ENCODE measurements at regions of chr1 and their contacts with region 1.

Region 1: DNA sequence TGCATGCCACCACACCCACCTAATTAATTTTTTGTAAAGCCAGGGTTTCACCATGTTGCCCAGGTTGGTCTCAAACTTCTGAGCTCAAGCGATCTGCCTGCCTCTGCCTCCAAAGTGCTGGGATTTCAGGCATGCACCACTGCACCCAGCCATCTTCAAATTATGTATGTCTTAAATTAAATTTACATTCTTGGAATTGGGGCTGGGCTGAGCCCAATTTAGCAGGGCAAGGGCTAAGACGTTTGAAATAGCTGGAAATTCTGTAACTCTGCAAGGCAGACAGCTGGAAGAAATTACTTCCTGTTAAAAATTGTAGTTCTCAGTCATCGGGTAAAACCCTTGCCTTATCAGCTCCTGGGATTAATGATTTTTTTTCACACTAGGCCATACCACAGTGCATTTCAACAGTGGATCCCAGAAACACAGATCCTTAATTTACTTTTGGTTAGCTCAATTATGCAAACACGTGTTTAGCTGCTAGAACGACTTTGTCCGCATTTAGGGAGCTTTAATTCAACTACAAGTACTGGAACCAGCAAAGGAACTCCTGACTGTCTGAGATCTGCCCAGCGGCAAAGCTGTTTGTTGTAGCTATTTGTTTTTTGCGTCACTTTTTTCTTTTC is 83.3 kb downstream of the OLFML3 start:
- DNase-seq: no peak
- H3K4me3 ChIP-seq: no peak overlapping the region
- H3K27ac ChIP-seq: no peak overlapping the region
- H3K4me1 ChIP-seq: no peaks in the 10 kb centered on the region
- H3K27me3 ChIP-seq: no peaks in the 10 kb centered on the region
- CTCF ChIP-seq: no peak

Region 2: DNA sequence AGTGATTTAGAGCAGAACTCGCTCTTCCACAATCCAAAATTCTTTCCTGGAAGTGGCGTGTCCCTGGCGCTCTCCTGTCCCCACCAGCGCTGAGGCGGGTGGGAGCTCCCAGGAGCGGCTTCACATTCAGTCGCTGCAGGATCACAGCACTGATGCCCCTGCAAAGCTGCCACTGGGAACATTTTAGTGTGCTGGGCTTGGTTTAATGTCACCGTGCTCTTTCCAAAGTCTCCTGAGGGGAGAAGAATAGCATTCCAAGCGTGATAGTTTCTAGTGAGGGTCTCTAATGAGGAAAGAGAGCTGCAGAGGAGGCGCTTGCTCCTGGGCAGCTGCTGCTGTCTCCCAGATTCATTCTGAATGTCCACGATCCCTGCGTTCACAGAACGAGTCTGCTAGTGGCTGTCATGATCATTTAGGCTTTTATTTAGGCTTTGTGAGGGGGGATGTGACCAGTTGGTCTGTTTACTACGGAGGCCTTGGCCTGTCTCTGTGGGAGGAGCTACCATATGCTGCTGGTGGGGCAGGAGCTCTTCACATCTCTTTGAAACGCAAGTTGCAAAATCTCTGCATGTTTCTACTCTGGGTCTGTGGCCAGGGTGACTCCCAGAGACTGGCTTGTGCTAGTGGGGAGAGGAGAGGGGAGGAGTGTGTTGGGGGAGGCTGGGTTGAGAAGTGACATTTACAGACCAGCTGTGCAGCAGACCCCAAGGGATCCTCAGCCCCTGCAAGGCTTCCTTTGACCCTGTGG is 59.9 kb before region 1 on chr1:
- intact Hi-C with region 1: no loop called
- DNase-seq: peak in 1 of 2 donors; percentile 56
- H3K4me3 ChIP-seq: no peak overlapping the region
- H3K27ac ChIP-seq: no peak overlapping the region
- H3K4me1 ChIP-seq: no peaks in the 10 kb centered on the region
- H3K27me3 ChIP-seq: no peaks in the 10 kb centered on the region
- CTCF ChIP-seq: no peak

Region 3: DNA sequence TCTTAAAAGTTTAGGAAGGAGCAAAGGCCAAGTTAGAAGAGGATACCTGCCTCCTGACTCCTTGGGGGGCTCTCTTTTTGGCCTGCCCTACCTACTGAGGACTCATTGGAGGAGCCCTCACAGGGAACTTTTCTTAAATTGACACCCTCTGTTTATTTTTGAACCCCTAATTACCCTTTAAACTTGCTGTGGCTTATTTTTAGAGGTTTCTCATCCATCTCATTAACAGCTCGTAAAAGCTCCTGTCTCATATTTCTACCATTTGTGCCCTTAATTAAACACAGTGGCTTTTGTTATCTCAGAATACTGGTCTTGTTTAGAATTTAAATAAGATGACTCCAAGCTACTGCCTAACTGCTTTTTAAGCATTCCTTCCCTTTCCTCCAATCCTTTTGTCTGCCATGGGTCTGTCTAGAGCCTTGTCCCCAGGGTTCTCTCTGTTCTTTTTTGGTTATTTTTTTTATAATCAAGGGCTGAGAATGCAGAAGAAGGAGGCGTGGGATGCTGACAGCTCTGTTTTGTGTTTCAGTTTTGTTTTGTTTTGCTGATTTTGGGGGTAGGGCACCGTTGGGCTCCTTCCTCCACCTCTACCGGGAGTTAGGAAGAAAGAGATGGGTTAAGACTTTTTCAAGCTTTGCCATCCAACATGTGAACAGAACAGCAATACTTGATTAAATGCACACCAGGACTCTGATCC is 13.1 kb after region 1 on chr1:
- intact Hi-C with region 1: no loop called
- DNase-seq: peak in 1 of 2 donors; percentile 5
- H3K4me3 ChIP-seq: no peak overlapping the region
- H3K27ac ChIP-seq: no peak overlapping the region
- H3K4me1 ChIP-seq: no peaks in the 10 kb centered on the region
- H3K27me3 ChIP-seq: no peaks in the 10 kb centered on the region
- CTCF ChIP-seq: no peak

Region 4: GRCh38 chr1:114219172-114219868 is 156.7 kb after region 1 on chr1:
- intact Hi-C with region 1: no loop called
- DNase-seq: no peak
- H3K4me3 ChIP-seq: peak overlapping the region in 1 of 2 donors; percentile 47
- H3K27ac ChIP-seq: no peak overlapping the region
- H3K4me1 ChIP-seq: no peaks in the 10 kb centered on the region
- H3K27me3 ChIP-seq: no peaks in the 10 kb centered on the region
- CTCF ChIP-seq: peak in 1 of 3 experiments; percentile 31

Region 5: DNA sequence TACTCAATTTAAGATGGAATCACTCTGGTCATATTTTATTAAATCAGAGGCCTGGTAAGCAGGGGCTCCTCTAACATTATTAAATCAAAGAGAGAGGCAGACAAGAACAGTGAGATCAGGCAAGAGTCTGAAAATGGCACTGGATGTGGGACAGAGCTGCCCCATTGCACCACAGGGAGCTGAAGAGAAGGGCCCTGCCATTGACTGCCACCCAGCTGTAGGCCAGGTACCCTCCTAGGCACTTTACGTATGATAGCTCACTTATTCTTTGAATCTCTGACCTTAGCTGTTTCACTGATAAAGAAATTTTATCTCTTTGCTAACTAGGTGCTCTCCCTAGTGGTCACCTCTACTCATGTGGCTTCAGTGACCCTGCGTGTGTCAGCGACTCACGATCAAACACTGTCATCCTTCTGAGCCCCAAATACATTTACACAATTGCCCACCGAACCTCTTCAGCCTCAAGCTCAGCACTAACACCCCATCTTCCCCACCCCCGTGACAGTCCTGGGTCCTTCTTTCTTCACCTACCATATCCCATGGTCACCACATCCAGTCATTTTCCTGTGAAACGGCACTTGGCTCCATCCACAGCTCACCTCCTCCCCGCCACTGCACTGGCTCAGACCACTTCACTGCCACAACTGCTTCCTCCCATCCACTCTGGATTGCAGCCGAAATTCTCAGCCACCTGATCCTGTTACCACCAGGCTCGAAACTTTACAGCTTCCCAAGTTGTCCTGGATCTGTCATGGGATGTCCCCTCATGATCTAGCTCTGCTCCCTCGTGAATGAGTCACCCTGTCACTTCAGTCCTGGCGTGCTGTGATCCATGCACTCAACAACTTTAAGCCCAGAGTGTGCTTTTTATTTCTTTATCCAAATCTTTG is 188.3 kb after region 1 on chr1:
- intact Hi-C with region 1: loop called (anchors 10 kb)
- DNase-seq: no peak
- H3K4me3 ChIP-seq: no peak overlapping the region
- H3K27ac ChIP-seq: no peak overlapping the region
- H3K4me1 ChIP-seq: no peaks in the 10 kb centered on the region
- H3K27me3 ChIP-seq: no peaks in the 10 kb centered on the region
- CTCF ChIP-seq: no peak

Measured in ascending aorta (tissue), 2 donors.